Breast epithelium (tissue), 4 donors: ENCODE measurements at regions of chr7 and their contacts with region 1.

Region 1: GRCh38 chr7:139650429-139651100 is 127.1 kb downstream of the CLEC2L start:
- DNase-seq: no peak
- H3K4me3 ChIP-seq: no peak overlapping the region
- H3K27ac ChIP-seq: peak overlapping the region in 1 of 2 donors; percentile 48
- H3K4me1 ChIP-seq: no peaks in the 10 kb centered on the region
- H3K27me3 ChIP-seq: no peaks in the 10 kb centered on the region
- CTCF ChIP-seq: no peak
- POLR2A ChIP-seq: no peak

Region 2: GRCh38 chr7:138126928-138127327 is 1523.6 kb before region 1 on chr7:
- intact Hi-C with region 1: no loop called
- DNase-seq: no peak
- H3K4me3 ChIP-seq: no peak overlapping the region
- H3K27ac ChIP-seq: no peak overlapping the region
- H3K4me1 ChIP-seq: no peaks in the 10 kb centered on the region
- H3K27me3 ChIP-seq: no peaks in the 10 kb centered on the region
- CTCF ChIP-seq: no peak
- POLR2A ChIP-seq: no peak

Region 3: DNA sequence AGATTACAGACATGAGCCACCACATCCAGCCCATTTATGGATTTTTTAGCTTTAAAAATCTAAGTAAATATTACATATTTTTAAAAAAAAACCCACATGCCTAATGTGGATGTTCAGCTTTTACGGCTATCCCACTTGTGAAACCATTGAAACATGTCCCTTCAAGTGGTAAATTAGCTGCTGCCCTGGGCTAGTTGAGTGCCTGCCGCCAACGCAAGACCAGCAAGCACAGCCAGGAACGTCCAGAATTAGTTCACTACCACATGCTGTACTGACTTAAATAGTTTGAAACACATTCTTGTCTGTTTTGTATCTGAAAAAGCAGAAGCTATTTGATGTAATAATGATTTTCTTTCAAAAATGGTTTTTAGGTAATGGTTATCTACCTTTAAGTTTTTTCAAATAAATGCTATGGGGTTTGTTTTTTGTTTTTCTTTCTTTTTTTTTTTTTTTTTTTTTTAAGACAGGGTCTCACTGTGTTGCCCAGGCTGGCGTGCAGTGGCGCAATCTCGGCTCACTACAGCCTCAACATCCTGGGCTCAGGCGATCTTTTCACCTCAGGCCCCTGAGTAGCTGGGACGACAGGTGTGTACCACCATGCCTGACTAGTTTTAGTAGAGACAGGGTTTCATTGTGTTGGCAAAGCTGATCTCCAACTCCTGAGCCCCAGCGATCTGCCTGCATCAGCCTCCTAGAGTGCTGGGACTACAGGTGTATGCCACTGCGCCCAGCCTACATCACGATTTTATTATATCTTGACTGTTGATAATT is 224.1 kb before region 1 on chr7:
- intact Hi-C with region 1: no loop called
- DNase-seq: peak in 1 of 2 donors; percentile 62
- H3K4me3 ChIP-seq: no peak overlapping the region
- H3K27ac ChIP-seq: no peak overlapping the region
- H3K4me1 ChIP-seq: peaks cover 0 to 3% of the 10 kb centered on the region in 2 donors
- H3K27me3 ChIP-seq: no peaks in the 10 kb centered on the region
- CTCF ChIP-seq: no peak
- POLR2A ChIP-seq: no peak

Region 4: GRCh38 chr7:139714163-139714901 is 63.8 kb after region 1 on chr7:
- intact Hi-C with region 1: no loop called
- DNase-seq: no peak
- H3K4me3 ChIP-seq: no peak overlapping the region
- H3K27ac ChIP-seq: peak overlapping the region in 1 of 2 donors; percentile 76
- H3K4me1 ChIP-seq: no peaks in the 10 kb centered on the region
- H3K27me3 ChIP-seq: no peaks in the 10 kb centered on the region
- CTCF ChIP-seq: no peak
- POLR2A ChIP-seq: no peak

Region 5: DNA sequence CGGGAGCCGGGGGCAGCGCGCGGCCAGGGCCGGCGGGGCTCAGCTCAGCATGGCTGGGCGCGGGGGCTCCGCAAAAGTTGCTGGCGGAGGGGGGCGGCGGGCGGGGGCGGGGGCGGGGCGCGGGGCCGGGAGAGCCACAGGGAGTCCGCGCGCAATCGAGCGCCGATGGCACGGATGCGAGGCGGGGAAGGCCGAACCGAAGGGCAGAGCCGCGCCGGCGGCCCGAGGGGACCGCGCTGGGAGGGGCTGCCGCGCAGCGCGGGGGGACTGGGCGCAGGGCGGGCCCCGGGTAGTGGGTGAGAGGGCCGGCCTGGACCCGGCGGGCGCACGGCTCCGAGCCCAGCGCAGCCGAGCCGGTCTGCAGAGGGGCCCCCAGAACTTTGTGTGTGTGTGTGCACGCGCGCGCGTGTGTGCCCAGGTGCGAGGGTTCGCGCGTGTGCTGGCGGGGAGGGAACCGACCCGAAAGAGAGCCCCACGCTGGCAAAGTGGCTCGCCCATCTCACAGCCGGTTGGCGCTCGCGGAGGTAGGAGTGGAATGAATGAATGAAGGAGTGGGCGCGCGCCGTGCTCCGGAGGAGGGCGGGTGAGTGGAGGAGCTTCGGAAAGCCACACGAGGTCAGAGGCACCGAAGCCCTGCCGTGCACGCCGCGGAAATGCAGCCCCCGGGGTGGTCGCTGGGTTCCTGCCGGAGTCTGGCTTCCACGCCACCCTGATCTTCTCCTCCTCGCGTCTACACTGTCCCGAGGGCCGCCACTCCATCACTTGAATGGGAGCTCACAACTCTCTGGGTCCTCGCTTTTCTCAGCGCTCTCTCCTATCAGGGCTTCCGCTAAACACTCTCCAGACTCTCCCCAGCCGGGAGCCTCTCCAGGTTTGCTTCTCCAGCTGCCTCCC is 127.6 kb after region 1 on chr7 and contains the start of gene HIPK2:
- intact Hi-C with region 1: loop called (anchors 1 kb)
- DNase-seq: peak; percentile 51 to 69
- H3K4me3 ChIP-seq: peak within 1 kb of the TSS; percentile 84 to 89 (median 84)
- H3K27ac ChIP-seq: peak within 1 kb of the TSS; percentile 96 to 99
- H3K4me1 ChIP-seq: peaks cover 0 to 7% of the 10 kb centered on the region in 2 donors
- H3K27me3 ChIP-seq: no peaks in the 10 kb centered on the region
- CTCF ChIP-seq: no peak
- POLR2A ChIP-seq: no peak
- total RNA-seq, gene HIPK2: 26.4 to 31.8 (median 31.1) TPM